Ovary (tissue), 10 donors: ENCODE measurements at regions of chr4 and their contacts with region 1.

Region 1: DNA sequence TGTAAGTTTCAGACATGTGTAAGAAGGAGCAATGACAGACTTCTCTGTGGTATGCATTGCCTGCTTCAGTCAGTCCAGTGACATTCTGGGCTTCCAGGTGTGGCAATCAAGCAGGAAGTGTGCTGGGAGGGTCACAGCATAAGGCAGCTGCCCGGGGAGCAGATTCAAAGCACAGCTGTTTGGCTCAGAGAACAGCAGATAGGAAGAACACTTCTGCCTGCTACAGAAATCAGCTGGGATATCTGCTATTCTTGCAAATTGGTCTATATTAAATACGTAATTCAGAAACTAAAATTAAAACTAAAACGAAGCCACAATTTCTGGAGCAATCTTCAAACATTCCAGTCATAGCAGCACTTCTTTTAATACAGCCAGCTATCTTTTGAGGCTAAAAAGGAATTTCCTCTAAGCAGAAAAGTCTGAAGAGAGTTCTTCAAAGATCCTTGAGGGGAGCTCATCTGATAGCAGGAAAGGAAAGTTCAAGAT is 47.5 kb upstream of the GALNT7 start:
- DNase-seq: no peak
- H3K4me3 ChIP-seq: no peak overlapping the region
- H3K27ac ChIP-seq: no peak overlapping the region
- H3K4me1 ChIP-seq: no peaks in the 10 kb centered on the region
- H3K27me3 ChIP-seq: no peaks in the 10 kb centered on the region
- CTCF ChIP-seq: no peak
- EP300 ChIP-seq: no peak
- POLR2A ChIP-seq: no peak

Region 2: DNA sequence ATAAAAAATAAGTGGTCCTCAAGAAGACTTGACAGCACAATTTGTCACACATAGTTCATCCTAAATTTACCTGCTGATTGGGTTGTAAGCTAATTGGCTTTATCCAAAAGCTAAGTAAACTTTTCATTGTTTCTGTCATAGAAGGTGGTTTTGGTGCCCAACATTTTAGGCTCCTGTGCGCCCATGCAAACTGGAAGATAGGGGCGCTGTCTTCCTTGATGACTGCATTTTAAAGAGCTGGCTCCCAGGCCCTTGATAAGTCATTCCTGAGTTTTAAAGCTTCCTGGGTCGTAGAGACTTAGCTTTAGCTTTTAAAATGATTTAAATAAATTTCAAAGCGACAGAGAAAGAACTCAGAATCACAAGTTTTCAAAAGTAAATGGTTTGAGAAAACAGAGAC is 577.9 kb before region 1 on chr4:
- intact Hi-C with region 1: loop called in 1 of 4 experiments (anchors 10 kb)
- DNase-seq: no peak
- H3K4me3 ChIP-seq: no peak overlapping the region
- H3K27ac ChIP-seq: no peak overlapping the region
- H3K4me1 ChIP-seq: no peaks in the 10 kb centered on the region
- H3K27me3 ChIP-seq: no peaks in the 10 kb centered on the region
- CTCF ChIP-seq: no peak
- EP300 ChIP-seq: no peak
- POLR2A ChIP-seq: no peak

Region 3: DNA sequence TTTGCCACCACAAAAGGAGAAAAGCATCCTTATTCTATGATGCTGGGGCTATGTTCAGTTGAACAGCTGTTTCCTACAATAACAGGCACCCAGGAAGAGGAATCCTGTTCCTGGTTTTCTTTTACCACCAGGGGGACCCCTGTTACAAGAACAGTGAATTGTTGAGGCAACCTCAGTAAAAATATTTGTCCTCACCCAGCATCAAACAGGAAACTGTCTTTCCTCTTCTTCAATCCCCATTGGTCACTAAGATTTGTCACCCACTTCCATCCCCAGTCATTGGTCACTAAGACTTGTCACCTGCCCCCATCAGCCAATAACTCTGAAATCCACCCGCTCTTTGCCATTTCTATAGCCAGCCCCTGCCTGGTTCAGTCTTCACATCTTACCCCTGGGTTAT is 96.0 kb before region 1 on chr4:
- intact Hi-C with region 1: no loop called
- DNase-seq: peak in 2 of 5 donors; percentile 39 to 66
- H3K4me3 ChIP-seq: no peak overlapping the region
- H3K27ac ChIP-seq: no peak overlapping the region
- H3K4me1 ChIP-seq: no peaks in the 10 kb centered on the region
- H3K27me3 ChIP-seq: no peaks in the 10 kb centered on the region
- CTCF ChIP-seq: peak; percentile 33 to 69 (median 61)
- EP300 ChIP-seq: no peak
- POLR2A ChIP-seq: no peak

Region 4: DNA sequence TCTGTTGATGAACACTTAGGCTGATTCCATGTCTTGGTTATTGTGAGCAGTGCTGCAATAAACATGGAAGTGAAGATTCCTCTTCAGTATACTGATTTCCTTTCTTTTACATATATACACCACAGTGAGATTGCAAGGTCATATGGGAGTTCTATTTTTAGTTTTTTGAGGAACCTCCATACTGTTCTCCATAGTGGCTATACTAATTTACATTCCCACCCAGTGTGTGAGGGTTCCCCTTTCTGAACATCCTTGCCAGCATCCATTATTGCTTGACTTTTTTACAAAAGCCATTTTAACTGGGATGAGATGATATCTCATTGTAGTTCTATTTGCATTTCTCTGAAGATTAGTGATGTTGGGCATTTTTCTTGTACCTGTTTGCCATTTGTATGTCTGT is 33.0 kb before region 1 on chr4:
- intact Hi-C with region 1: no loop called
- DNase-seq: no peak
- H3K4me3 ChIP-seq: no peak overlapping the region
- H3K27ac ChIP-seq: no peak overlapping the region
- H3K4me1 ChIP-seq: no peaks in the 10 kb centered on the region
- H3K27me3 ChIP-seq: no peaks in the 10 kb centered on the region
- CTCF ChIP-seq: no peak
- EP300 ChIP-seq: no peak
- POLR2A ChIP-seq: no peak